ENCODE measurements at regions of chr1 and their contacts with region 1.

Region 1: DNA sequence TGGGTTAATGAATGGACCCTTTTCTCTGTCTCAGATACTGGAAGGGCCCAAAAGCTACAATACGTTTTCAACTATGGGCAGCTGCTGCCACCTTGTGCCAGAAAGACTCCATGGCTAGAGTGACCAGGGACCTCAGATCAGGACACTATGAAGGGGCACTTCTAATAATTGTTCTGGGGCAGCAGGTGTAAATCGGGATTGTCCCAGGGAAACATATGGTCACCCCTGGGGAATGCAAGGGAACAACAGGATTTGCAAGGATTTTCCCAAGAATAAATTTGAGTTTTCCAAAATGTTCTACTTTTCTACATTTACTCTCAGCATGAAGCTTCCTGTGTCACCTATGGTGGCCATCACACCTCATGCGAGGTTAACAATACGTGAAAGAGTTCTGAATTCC is 12.0 kb upstream of the FCAMR start:
- DNase-seq: peak; percentile 78
- ATAC-seq: peak; percentile 89
- H3K4me3 ChIP-seq: no peak overlapping the region
- H3K4me3 Mint-ChIP-seq: no peak overlapping the region
- H3K27ac ChIP-seq: no peak overlapping the region
- H3K27ac Mint-ChIP-seq: no peak overlapping the region
- H3K4me1 ChIP-seq: no peaks in the 10 kb centered on the region
- H3K4me1 Mint-ChIP-seq: no peaks in the 10 kb centered on the region
- H3K27me3 ChIP-seq: peaks cover 0 to 4% (median 0%) of the 10 kb centered on the region in 4 experiments
- H3K27me3 Mint-ChIP-seq: peaks cover 7% of the 10 kb centered on the region
- CTCF ChIP-seq: peak; percentile 90

Region 2: GRCh38 chr1:206489980-206490770 is 492.0 kb before region 1 on chr1:
- CTCF ChIA-PET with region 1: interaction called, 23 read pairs
- POLR2A ChIA-PET with region 1: no interaction called
- intact Hi-C with region 1: loop called (anchors 10 kb)
- DNase-seq: peak; percentile 73
- ATAC-seq: peak; percentile 80
- H3K4me3 ChIP-seq: no peak overlapping the region
- H3K4me3 Mint-ChIP-seq: no peak overlapping the region
- H3K27ac ChIP-seq: no peak overlapping the region
- H3K27ac Mint-ChIP-seq: no peak overlapping the region
- H3K4me1 ChIP-seq: peaks cover 4 to 5% of the 10 kb centered on the region in 2 donors
- H3K4me1 Mint-ChIP-seq: peaks cover 7% of the 10 kb centered on the region
- H3K27me3 ChIP-seq: no peaks in the 10 kb centered on the region
- H3K27me3 Mint-ChIP-seq: no peaks in the 10 kb centered on the region
- CTCF ChIP-seq: peak; percentile 83

Region 3: DNA sequence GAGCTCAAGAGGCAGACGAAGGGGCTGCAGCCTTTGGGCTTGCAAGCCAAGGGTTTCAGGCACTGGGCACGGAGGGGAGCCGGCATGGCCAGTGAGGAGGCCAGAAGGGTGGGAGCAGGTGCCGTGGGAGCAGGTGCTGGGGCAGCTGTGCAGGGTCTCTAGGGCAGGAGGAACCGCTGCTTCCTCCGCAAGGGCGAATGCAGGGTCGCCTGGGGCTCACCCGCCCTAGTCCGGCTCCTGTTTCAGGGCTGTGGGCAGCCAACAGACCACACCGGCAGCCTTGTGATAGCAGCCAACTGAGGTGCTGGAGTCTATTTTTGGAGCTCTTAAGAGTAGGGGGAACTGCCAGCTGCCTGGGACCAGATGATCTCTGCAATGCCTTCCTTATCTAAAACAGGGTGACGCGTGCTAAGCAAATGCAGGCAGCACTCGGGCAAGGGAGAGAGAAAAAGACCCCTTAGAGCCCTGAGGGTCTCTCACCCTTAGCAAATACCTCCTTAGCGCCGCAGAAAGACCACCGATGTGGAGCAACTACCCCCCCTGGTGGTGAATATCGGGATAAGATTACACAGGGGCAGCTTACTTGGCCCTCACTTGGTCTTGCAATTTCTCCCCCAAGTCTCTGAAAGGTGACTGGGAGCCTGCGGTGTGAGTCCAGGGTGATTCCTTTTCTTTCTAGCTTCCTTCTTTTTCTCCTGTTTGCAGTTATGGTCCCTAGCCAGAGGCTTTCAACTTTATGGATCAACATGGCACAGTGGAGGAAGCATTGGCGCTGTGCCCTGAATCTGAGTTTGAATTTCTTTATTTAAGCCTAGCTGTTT is 318.2 kb before region 1 on chr1:
- CTCF ChIA-PET with region 1: interaction called, 61 read pairs
- POLR2A ChIA-PET with region 1: no interaction called
- intact Hi-C with region 1: no loop called
- DNase-seq: peak; percentile 86
- ATAC-seq: peak; percentile 80
- H3K4me3 ChIP-seq: peak overlapping the region in 2 of 5 experiments; percentile 31 to 34
- H3K4me3 Mint-ChIP-seq: peak overlapping the region; percentile 64
- H3K27ac ChIP-seq: no peak overlapping the region
- H3K27ac Mint-ChIP-seq: no peak overlapping the region
- H3K4me1 ChIP-seq: peaks cover 14 to 16% of the 10 kb centered on the region in 2 donors
- H3K4me1 Mint-ChIP-seq: peaks cover 24% of the 10 kb centered on the region
- H3K27me3 ChIP-seq: peaks cover 0 to 48% (median 15%) of the 10 kb centered on the region in 4 experiments
- H3K27me3 Mint-ChIP-seq: peaks cover 40% of the 10 kb centered on the region
- CTCF ChIP-seq: peak; percentile 89

Region 4: DNA sequence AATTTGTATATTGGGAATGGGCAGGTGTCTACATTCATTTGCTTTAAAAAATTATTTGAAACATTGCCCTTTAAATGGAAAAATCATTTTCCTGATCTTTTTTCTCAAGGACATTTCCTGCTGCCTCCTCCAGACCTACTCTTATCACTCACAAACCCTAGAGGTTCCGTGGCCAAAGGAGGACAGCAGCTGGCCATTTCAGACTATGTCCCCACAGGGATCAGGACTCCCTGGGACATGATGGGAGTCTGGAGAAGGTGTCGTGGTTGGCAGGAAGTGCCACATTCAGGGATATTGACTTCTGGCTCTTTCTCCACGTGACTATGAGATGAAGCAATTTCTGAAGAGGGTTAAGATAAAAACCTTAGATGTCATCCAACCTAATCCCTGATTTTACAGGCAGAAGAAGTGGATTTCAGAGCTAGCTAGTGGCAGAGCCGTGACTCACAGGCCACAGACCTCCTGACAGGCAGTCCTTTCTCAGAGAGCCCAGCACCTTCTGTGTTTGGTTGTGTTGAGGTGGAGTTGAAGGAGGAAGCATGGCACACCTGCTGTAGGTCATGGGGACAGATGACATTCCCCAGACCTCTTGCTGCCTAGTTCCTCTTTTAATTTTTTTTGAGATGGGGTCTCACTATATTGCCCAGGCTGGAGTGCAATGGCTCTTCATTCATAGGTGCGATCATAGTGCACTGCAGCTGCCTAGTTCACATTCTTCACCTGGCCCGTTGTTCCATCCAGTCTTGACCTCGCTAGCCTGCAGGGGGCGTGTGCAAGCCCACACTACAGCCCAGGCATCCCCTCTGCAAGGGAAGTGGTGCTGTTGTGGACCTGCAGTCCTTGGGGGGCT is 184.5 kb before region 1 on chr1:
- CTCF ChIA-PET with region 1: interaction called, 18 read pairs
- POLR2A ChIA-PET with region 1: no interaction called
- intact Hi-C with region 1: no loop called
- DNase-seq: peak; percentile 68
- ATAC-seq: peak; percentile 34
- H3K4me3 ChIP-seq: no peak overlapping the region
- H3K4me3 Mint-ChIP-seq: no peak overlapping the region
- H3K27ac ChIP-seq: no peak overlapping the region
- H3K27ac Mint-ChIP-seq: no peak overlapping the region
- H3K4me1 ChIP-seq: peaks cover 23 to 39% of the 10 kb centered on the region in 2 donors
- H3K4me1 Mint-ChIP-seq: peaks cover 63% of the 10 kb centered on the region
- H3K27me3 ChIP-seq: no peaks in the 10 kb centered on the region
- H3K27me3 Mint-ChIP-seq: no peaks in the 10 kb centered on the region
- CTCF ChIP-seq: peak; percentile 66

Region 5: DNA sequence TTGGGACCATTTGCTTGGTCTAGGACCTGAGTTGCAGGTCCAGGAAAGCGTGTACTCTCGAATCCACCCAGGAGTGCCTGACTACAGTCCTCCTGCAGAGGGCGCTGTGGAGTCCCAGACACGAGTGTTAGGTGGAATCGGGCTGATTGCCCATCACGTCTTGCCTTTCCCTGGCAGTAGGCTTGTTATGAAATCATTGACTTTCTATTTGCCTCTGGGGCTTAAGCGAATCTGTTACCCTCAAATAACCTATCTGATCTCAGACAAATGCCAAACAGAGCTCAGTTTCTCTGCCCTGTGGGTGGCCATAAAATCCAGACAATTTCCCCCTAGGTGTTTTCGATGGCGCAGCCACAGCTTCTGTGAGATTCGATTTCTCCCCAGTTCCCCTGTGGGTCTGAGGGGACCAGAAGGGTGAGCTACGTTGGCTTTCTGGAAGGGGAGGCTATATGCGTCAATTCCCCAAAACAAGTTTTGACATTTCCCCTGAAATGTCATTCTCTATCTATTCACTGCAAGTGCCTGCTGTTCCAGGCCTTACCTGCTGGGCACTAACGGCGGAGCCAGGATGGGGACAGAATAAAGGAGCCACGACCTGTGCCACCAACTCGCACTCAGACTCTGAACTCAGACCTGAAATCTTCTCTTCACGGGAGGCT is 117.1 kb before region 1 on chr1 and contains the start of gene IL20:
- CTCF ChIA-PET with region 1: interaction called, 39 read pairs
- POLR2A ChIA-PET with region 1: no interaction called
- intact Hi-C with region 1: loop called (anchors 1 kb)
- DNase-seq: peak; percentile 82
- ATAC-seq: peak; percentile 80
- H3K4me3 ChIP-seq: no peak within 1 kb of the TSS
- H3K4me3 Mint-ChIP-seq: no peak within 1 kb of the TSS
- H3K27ac ChIP-seq: no peak within 1 kb of the TSS
- H3K27ac Mint-ChIP-seq: peak within 1 kb of the TSS; percentile 43
- H3K4me1 ChIP-seq: no peaks in the 10 kb centered on the region
- H3K4me1 Mint-ChIP-seq: peaks cover 7% of the 10 kb centered on the region
- H3K27me3 ChIP-seq: peaks cover 0 to 4% (median 0%) of the 10 kb centered on the region in 4 experiments
- H3K27me3 Mint-ChIP-seq: peaks cover 16% of the 10 kb centered on the region
- CTCF ChIP-seq: peak; percentile 97
- total RNA-seq, gene IL20: not detected in 2 replicates

Region 6: DNA sequence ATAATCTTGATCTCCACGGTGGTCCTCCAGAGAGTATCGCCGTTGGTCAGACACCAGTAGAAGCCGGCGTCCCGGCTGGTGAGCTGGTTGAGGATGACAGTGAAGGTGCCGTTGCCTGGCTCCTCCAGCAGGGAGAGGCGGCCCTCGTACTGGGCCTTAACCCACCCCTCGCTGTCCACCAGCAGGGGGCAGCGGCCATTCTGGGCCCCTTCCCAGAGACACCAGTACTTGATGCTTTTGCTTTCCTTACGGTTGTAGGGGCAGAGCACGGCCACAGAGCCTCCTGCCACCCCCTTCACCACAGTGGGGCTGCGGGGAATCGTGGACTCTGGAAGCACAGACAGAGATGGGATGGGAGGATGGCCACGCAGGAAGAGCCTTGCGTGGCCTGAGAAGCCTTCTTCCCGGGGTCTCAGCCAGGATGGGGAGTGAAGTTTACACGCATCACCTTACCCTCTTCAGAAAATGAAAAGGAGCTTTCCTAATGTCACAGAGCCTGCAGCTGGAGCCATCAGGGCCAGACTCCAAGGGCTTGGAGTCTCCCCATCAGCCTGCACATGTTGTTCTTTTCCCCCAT is 46.6 kb before region 1 on chr1:
- CTCF ChIA-PET with region 1: interaction called, 114 read pairs
- POLR2A ChIA-PET with region 1: no interaction called
- intact Hi-C with region 1: loop called (anchors 5 kb)
- DNase-seq: peak; percentile 59
- ATAC-seq: peak; percentile 14
- H3K4me3 ChIP-seq: no peak overlapping the region
- H3K4me3 Mint-ChIP-seq: no peak overlapping the region
- H3K27ac ChIP-seq: no peak overlapping the region
- H3K27ac Mint-ChIP-seq: no peak overlapping the region
- H3K4me1 ChIP-seq: peaks cover 27 to 30% of the 10 kb centered on the region in 2 donors
- H3K4me1 Mint-ChIP-seq: peaks cover 30% of the 10 kb centered on the region
- H3K27me3 ChIP-seq: no peaks in the 10 kb centered on the region
- H3K27me3 Mint-ChIP-seq: no peaks in the 10 kb centered on the region
- CTCF ChIP-seq: peak; percentile 51

Region 7: DNA sequence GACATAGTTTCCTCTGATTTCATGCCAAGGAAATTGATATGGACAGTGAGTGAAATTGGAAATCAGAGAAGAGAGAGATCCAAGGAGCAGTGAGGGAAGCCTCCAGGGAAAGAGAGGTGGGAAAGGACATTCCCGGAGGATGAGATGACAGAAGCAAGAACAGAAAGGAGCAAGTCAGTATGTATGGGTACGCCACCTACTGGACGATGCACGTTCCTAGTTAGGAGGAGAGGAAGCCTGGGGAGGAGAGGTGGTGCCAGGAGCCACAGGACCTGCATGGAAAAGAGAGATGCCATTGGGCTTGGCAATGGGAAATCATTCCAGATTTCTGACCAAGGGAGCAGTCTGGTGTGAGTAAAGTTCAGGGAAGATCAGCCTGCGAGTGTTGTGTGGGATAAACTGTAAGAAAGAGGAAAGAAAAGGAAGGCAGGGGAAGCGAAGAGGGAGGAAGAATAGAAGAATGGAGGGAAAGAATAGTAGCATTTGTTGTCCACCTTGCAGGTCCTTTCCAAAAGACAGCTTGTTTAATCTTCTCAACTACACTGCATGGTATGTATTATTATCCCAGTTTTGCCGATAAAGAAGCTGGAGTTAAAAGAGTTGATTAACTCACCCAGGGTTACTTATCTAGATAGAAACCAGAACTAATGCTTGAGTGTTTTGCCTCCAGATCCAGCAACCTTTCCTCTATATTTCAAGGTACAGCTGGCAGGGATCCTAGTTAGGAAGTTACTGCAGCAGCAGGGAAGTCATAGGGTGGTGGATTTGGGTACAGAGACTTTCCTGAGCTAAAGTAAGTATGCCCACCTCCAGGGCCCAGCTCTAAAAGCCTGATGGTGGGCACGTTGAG is 23.0 kb after region 1 on chr1:
- CTCF ChIA-PET with region 1: interaction called, 26 read pairs
- POLR2A ChIA-PET with region 1: no interaction called
- intact Hi-C with region 1: no loop called
- DNase-seq: peak; percentile 57
- ATAC-seq: peak; percentile 47
- H3K4me3 ChIP-seq: no peak overlapping the region
- H3K4me3 Mint-ChIP-seq: no peak overlapping the region
- H3K27ac ChIP-seq: no peak overlapping the region
- H3K27ac Mint-ChIP-seq: no peak overlapping the region
- H3K4me1 ChIP-seq: peaks cover 3 to 4% of the 10 kb centered on the region in 2 donors
- H3K4me1 Mint-ChIP-seq: peaks cover 2% of the 10 kb centered on the region
- H3K27me3 ChIP-seq: peaks cover 0 to 9% (median 2%) of the 10 kb centered on the region in 4 experiments
- H3K27me3 Mint-ChIP-seq: peaks cover 17% of the 10 kb centered on the region
- CTCF ChIP-seq: peak; percentile 87